Right ventricle myocardium inferior (tissue), 1 donor: ENCODE measurements at regions of chr22 and their contacts with region 1.

Region 1: GRCh38 chr22:46239261-46240048 is 10.6 kb downstream of the CDPF1 start:
- DNase-seq: no peak
- ATAC-seq: no peak

Region 2: DNA sequence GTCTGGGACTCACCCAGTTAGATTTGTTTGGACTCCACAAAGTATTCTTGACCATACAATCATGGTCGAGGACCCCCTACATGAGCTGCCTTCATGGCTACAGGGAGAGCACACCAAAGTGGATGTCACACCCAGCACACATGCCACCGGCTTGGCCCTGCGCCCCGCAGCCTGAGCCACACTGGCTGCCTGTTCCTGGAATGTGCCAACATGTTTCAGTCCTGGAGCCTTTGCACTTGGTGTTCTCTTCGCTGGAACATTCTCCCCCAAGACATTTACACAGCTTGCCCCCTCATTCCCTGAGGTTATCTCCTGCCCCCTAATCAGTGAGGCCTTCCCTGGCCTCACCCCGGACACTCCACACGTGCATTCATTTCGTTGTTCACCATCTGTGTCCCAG is 43.2 kb before region 1 on chr22:
- intact Hi-C with region 1: loop called (anchors 5 kb)
- DNase-seq: peak; percentile 90
- ATAC-seq: peak; percentile 92

Region 3: GRCh38 chr22:46219636-46220035 is 19.8 kb before region 1 on chr22:
- intact Hi-C with region 1: no loop called
- DNase-seq: no peak
- ATAC-seq: no peak